Ovary (tissue), 10 donors: ENCODE measurements at regions of chr16 and their contacts with region 1.

Region 1: DNA sequence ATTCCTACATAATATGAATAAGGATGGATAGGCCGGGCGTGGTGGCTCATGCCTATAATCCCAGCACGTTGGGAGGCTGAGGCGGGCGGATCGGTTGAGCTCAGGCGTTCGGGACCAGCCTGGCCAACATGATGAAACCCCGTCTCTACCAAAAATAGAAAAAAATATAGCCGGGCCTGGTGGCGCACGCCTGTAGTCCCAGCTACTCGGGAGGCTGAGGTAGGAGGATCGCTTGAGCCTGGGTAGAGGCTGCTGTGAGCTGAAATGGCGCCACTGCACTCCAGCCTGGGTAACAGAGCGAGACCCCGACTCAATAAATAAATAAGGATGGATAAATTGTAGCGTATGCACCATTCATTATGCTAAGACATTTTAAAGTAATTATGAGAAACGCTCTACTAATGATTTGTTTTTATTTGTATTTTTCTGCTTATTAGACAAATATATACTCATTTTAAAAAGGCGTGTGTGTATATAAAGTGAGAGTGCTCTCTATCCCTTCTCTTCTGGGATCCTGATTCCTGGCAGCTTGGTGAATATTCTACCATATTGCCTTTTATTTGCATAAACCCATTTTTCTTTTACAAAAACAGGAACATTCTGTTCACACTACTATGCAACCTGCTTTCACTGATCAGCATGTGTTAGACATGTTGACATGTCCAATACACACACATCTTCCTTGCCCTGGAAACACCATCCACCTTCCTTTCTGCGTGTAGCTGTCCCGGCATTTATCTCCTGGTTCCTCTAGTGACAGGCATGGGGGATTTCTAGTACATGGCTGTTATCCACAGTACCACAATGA is 26.4 kb downstream of the DDX19A start:
- DNase-seq: no peak
- H3K4me3 ChIP-seq: no peak overlapping the region
- H3K27ac ChIP-seq: no peak overlapping the region
- H3K4me1 ChIP-seq: no peaks in the 10 kb centered on the region
- H3K27me3 ChIP-seq: no peaks in the 10 kb centered on the region
- CTCF ChIP-seq: no peak
- EP300 ChIP-seq: no peak
- POLR2A ChIP-seq: no peak

Region 2: DNA sequence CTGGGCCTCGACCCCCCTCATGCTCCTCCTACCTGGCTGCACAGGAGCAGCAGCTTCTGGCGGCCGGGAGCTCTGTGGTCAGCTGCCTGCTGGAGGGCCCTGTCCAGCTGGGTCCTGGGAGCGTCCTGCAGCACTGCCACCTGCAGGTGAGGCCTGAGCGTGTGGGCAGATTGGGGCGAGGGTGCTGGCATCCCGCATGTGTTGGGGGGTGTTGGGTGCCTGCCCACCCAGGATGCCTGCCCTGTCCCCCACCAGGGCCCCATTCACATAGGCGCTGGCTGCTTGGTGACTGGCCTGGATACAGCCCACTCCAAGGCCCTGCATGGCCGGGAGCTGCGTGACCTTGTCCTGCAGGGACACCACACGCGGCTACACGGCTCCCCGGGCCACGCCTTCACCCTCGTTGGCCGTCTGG is 97.8 kb after region 1 on chr16:
- intact Hi-C with region 1: loop called in 1 of 4 experiments (anchors 5 kb)
- DNase-seq: peak in 1 of 5 donors; percentile 62
- H3K4me3 ChIP-seq: no peak overlapping the region
- H3K27ac ChIP-seq: no peak overlapping the region
- H3K4me1 ChIP-seq: peaks cover 4% of the 10 kb centered on the region
- H3K27me3 ChIP-seq: no peaks in the 10 kb centered on the region
- CTCF ChIP-seq: no peak
- EP300 ChIP-seq: no peak
- POLR2A ChIP-seq: no peak